ENCODE measurements at regions of chr12 and their contacts with region 1.

Region 1: DNA sequence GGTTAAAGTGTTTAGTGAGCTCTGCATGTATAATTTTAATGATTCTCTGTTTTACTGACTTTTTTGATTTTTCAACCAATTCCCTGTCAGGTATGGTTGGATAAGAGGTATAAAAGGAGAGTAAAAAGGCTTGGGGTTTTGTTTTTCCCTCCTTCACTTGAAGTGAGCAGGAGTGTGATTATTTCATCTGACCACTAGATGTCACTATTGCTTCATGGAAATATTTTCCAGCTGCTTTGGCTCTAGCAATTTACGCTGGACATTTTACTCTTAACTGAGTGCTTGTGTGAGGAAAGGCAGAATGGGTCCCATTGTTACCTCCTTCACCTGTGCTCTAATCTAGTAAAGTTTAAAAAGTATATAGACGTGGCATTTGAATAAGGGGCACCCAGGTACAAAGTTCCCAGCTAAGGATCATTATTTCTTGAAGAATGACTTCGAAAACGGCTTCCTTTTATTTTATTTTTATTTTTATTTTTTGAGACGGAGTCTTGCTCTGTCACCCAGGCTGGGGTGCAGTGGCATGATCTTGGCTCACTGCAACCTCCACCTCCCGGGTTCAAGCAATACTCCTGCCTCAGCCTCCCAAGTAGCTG is 66.5 kb downstream of the TBC1D30 start:
- DNase-seq: peak in 1 of 2 experiments; percentile 65
- H3K4me3 ChIP-seq: peak overlapping the region; percentile 18
- H3K4me3 Mint-ChIP-seq: peak overlapping the region; percentile 73
- H3K27ac Mint-ChIP-seq: peak overlapping the region; percentile 82
- H3K4me1 ChIP-seq: peaks cover 45% of the 10 kb centered on the region
- H3K4me1 Mint-ChIP-seq: peaks cover 28% of the 10 kb centered on the region
- H3K27me3 ChIP-seq: no peaks in the 10 kb centered on the region
- H3K27me3 Mint-ChIP-seq: no peaks in the 10 kb centered on the region
- CTCF ChIP-seq: peak; percentile 53 to 81

Region 2: GRCh38 chr12:64796208-64796845 is 94.6 kb before region 1 on chr12:
- CTCF ChIA-PET with region 1: interaction called, 28 read pairs
- POLR2A ChIA-PET with region 1: no interaction called
- intact Hi-C with region 1: loop called (anchors 1 kb)
- DNase-seq: peak; percentile 76 to 85
- H3K4me3 ChIP-seq: no peak overlapping the region
- H3K4me3 Mint-ChIP-seq: no peak overlapping the region
- H3K27ac Mint-ChIP-seq: no peak overlapping the region
- H3K4me1 ChIP-seq: peaks cover 39% of the 10 kb centered on the region
- H3K4me1 Mint-ChIP-seq: peaks cover 45% of the 10 kb centered on the region
- H3K27me3 ChIP-seq: no peaks in the 10 kb centered on the region
- H3K27me3 Mint-ChIP-seq: no peaks in the 10 kb centered on the region
- CTCF ChIP-seq: peak; percentile 62 to 76

Region 3: GRCh38 chr12:64810831-64811230 is 80.1 kb before region 1 on chr12:
- CTCF ChIA-PET with region 1: no interaction called
- POLR2A ChIA-PET with region 1: no interaction called
- intact Hi-C with region 1: loop called (anchors 2 kb)
- DNase-seq: peak; percentile 19 to 38
- H3K4me3 ChIP-seq: no peak overlapping the region
- H3K4me3 Mint-ChIP-seq: no peak overlapping the region
- H3K27ac Mint-ChIP-seq: no peak overlapping the region
- H3K4me1 ChIP-seq: peaks cover 23% of the 10 kb centered on the region
- H3K4me1 Mint-ChIP-seq: peaks cover 19% of the 10 kb centered on the region
- H3K27me3 ChIP-seq: no peaks in the 10 kb centered on the region
- H3K27me3 Mint-ChIP-seq: no peaks in the 10 kb centered on the region
- CTCF ChIP-seq: no peak

Region 4: DNA sequence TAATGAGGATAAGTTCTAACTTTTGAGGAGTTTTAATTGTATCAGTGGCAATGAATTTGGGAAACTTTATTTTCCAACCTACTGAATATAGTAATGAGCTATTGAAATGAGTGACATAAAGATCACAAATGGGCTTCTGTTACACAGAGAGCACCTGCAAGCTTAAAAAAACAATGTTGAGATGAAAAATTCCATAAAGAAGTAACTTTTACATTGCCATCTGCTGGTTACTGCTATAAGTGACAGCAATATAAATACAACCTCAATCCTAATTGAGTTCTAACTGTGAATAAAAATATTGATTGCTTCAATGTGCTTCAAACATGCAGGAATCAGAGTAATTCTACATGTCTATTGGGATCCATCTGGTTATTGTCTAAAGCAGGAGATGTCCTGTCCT is 216.0 kb after region 1 on chr12:
- CTCF ChIA-PET with region 1: interaction called, 12 read pairs
- POLR2A ChIA-PET with region 1: interaction called, 4 read pairs
- intact Hi-C with region 1: loop called (anchors 1 kb)
- DNase-seq: no peak
- H3K4me3 ChIP-seq: no peak overlapping the region
- H3K4me3 Mint-ChIP-seq: no peak overlapping the region
- H3K27ac Mint-ChIP-seq: no peak overlapping the region
- H3K4me1 ChIP-seq: no peaks in the 10 kb centered on the region
- H3K4me1 Mint-ChIP-seq: no peaks in the 10 kb centered on the region
- H3K27me3 ChIP-seq: no peaks in the 10 kb centered on the region
- H3K27me3 Mint-ChIP-seq: no peaks in the 10 kb centered on the region
- CTCF ChIP-seq: peak; percentile 28 to 31

Region 5: DNA sequence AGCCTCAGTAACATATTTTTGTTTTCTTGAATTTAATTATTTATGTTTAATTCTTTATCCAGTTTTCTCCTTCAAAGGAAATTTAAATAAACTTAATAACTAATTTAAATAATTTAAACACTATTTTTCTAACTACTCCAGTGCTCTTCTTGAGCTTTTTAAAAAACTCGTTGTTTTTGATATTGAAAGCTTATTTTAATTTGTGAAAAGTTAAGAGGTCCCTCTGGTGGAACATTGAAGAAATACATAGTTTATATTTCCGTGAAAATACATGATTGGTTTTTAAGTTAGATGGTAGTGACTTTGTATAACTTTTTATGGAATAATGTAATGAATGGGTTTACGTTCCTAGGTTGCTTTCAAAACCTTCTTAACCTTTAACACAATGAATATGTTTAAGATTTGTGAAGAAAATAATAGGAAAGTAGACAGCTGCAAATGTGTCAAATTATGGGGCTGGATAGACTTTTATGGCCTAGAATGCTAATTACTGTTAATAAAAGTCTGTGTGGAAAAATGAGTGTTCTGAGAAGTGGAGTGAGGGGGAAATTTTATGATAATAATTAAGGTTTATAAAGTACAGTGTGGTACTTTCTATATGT is 341.6 kb after region 1 on chr12:
- CTCF ChIA-PET with region 1: interaction called, 6 read pairs
- POLR2A ChIA-PET with region 1: no interaction called
- intact Hi-C with region 1: loop called (anchors 2 kb)
- DNase-seq: no peak
- H3K4me3 ChIP-seq: no peak overlapping the region
- H3K4me3 Mint-ChIP-seq: no peak overlapping the region
- H3K27ac Mint-ChIP-seq: no peak overlapping the region
- H3K4me1 ChIP-seq: no peaks in the 10 kb centered on the region
- H3K4me1 Mint-ChIP-seq: no peaks in the 10 kb centered on the region
- H3K27me3 ChIP-seq: no peaks in the 10 kb centered on the region
- H3K27me3 Mint-ChIP-seq: no peaks in the 10 kb centered on the region
- CTCF ChIP-seq: peak; percentile 17 to 22

Region 6: DNA sequence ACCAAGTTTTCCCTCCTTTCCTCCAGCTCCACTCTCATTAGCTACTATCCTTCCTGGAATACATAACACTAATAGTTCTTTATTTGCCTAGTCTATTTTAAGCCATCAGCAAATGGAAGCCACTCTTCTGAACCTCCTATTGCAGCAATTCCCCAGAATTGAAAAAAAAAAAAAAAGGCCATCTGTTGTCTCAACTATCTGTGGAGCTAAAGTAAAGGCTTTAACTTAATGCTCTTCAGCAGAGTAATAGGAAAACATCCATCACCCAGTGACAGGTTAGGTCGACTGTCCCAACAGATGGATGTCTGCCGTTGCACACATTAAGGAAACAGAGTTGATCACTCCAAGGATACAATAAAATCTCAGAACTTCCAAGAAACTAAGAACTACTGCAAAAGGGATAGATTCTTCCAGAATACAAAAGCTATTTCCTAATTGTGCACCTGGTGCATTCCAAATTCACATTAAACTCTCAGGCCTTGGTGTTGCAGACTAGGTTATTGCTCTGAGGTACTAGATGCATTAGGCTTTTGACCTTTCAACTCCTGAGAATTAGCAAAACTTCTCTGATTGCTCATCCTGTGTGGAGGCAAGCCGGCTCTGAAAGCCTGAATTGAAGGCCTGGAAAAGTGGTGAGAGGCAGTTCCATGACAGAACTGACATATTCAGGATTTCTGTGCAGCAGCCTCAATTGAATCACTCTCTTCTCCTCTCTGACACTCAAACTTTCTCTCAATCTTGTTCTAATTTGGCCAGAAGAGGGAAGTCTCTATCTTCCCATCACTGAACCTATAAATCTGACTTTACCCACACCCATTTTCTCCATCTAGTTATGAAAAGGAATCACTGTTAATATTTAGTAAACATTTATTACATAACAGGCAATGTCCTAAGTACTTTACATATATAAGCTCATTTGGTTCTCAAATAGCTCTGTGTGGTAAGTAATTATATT is 695.0 kb after region 1 on chr12:
- CTCF ChIA-PET with region 1: no interaction called
- POLR2A ChIA-PET with region 1: no interaction called
- intact Hi-C with region 1: no loop called
- DNase-seq: no peak
- H3K4me3 ChIP-seq: no peak overlapping the region
- H3K4me3 Mint-ChIP-seq: no peak overlapping the region
- H3K27ac Mint-ChIP-seq: no peak overlapping the region
- H3K4me1 ChIP-seq: no peaks in the 10 kb centered on the region
- H3K4me1 Mint-ChIP-seq: peaks cover 6% of the 10 kb centered on the region
- H3K27me3 ChIP-seq: no peaks in the 10 kb centered on the region
- H3K27me3 Mint-ChIP-seq: no peaks in the 10 kb centered on the region
- CTCF ChIP-seq: no peak

Measured in Caco-2 (cell line).